ENCODE measurements at regions of chr7 and their contacts with region 1.

Region 1: DNA sequence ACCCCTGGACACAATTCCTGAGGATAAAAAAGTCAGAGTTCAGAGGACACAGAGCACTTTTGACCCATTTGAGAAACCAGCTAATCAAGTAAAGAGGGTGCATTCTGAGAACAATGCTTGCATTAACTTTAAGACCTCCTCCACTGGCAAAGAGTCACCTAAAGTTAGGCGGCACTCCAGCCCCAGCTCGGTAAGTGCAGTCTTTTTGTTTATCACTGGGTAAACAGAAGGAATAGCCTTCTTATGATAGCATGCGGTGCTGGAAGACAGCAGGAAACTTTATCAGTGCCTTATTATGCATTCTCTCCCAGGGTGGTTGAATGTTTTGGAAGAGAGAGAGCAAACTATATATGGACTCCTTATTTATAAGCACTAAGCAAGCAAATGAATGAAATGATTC is 130.5 kb downstream of the CDK14 start:
- DNase-seq: no peak
- H3K4me3 ChIP-seq: no peak overlapping the region
- H3K27ac ChIP-seq: no peak overlapping the region
- H3K4me1 ChIP-seq: peaks cover 0 to 30% of the 10 kb centered on the region in 2 experiments; a peak in 2 of 4 replicates
- H3K27me3 ChIP-seq: no peaks in the 10 kb centered on the region
- CTCF ChIP-seq: no peak
- EP300 ChIP-seq: no peak
- RAD21 ChIP-seq: no peak

Region 2: DNA sequence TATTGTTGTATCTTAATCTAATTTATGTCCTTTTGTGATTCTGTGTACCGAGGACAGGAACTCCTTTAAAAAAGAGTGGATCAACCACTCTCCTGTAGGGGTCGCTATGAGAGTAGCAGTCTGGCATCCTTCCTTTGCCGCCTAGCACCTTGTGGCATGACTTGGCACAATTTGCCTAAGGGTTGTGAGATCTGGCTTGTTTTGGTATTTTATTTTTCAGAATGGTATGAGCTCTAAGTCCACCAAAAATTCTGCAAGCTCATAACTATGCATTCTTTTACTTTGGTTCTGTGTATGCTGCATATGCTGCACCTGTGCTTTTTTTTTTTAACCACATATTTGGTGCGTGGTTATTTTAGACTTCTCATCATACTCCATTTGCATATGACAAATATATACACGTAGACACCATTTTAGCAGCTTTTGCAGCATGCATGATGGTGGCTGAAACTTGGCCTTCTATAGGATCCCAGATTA is 17.7 kb before region 1 on chr7:
- CTCF ChIA-PET with region 1: interaction called, 10 read pairs
- POLR2A ChIA-PET with region 1: no interaction called
- DNase-seq: no peak
- H3K4me3 ChIP-seq: peak overlapping the region in 1 of 2 experiments; percentile 20; a peak in 1 of 4 replicates
- H3K27ac ChIP-seq: no peak overlapping the region
- H3K4me1 ChIP-seq: peaks cover 9 to 34% of the 10 kb centered on the region in 2 experiments
- H3K27me3 ChIP-seq: no peaks in the 10 kb centered on the region
- CTCF ChIP-seq: peak; percentile 75
- EP300 ChIP-seq: no peak
- RAD21 ChIP-seq: peak; percentile 62

Region 3: DNA sequence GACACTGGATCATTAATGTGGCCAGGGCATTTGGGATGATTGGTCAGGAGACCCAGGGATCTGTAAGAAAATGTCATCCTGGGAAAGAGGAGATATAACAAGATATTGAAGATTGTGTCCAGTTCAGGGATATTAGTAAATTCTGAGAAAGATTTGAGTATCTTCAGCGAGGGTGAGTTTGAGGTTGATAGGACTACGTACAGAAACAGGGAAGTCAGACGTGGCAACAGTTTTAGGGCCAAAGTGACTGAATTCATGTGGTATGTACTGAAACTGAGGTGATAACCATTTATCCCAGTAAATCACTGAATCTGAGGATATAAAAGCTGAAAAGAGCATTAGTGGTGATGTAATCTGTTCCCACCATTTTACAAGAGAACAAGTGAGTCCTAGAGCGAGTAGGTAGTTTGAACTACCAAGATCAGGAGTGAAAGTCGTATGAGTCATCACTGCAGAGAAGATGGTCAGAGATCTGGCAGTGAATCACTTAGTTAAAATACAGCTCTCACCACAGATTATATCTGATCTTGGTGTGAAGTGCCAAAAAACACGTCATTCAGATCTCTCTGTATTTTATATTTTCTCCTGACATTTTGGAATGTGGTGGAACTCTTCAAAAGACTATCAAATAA is 90.0 kb after region 1 on chr7:
- CTCF ChIA-PET with region 1: no interaction called
- POLR2A ChIA-PET with region 1: no interaction called
- DNase-seq: peak; percentile 9
- H3K4me3 ChIP-seq: peak overlapping the region in 1 of 2 experiments; percentile 6; a peak in 1 of 4 replicates
- H3K27ac ChIP-seq: peak overlapping the region; percentile 40 to 97; a peak in 3 of 4 replicates
- H3K4me1 ChIP-seq: peaks cover 11 to 31% of the 10 kb centered on the region in 2 experiments
- H3K27me3 ChIP-seq: no peaks in the 10 kb centered on the region
- CTCF ChIP-seq: no peak
- EP300 ChIP-seq: peak; percentile 86 to 100
- RAD21 ChIP-seq: no peak